ENCODE measurements at regions of chr14 and their contacts with region 1.

Region 1: DNA sequence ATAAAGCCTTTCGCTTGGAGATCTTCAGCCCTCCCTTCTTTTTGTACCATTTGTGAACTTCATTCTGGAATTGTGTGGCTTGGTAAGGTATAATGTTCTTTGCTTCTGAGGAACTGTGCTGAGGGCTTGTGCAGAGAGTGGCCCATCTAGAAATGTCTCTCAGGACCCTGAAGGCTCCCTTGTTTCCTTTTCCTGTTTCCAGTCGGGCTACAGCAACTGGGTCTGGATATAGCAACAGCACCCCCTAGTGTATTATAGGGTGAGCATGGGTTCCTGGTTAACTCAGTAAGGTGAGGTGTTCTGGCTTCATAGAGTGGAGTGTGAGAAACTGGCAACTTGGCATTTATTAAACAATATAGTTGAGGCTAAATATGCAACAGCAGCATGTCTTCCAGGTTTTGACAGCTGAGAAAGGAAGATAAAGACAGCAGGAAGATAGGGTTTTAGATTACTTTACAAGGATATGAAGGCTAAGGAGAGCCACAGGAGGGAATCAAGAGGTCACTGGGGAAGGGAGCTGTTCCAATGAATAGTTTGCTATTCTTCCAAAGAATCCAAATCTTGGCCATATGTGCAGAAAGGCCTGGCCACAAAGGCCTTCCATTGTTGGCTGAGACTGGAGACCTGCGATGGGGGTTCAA is 49.1 kb upstream of the RNU6-8 start:
- DNase-seq: peak; percentile 45
- H3K4me3 ChIP-seq: no peak overlapping the region
- H3K27ac ChIP-seq: no peak overlapping the region
- H3K27me3 ChIP-seq: peaks cover 2% of the 10 kb centered on the region
- CTCF ChIP-seq: peak; percentile 94

Region 2: GRCh38 chr14:31456841-31457664 is 795.1 kb before region 1 on chr14 and contains the start of gene DTD2:
- CTCF ChIA-PET with region 1: interaction called, 12 read pairs
- POLR2A ChIA-PET with region 1: no interaction called
- DNase-seq: peak; percentile 79
- H3K4me3 ChIP-seq: peak within 1 kb of the TSS; percentile 86
- H3K27ac ChIP-seq: peak within 1 kb of the TSS; percentile 83
- H3K27me3 ChIP-seq: no peaks in the 10 kb centered on the region
- CTCF ChIP-seq: no peak
- polyA plus RNA-seq, gene DTD2: 16.6 and 18.8 TPM in 2 replicates

Region 3: DNA sequence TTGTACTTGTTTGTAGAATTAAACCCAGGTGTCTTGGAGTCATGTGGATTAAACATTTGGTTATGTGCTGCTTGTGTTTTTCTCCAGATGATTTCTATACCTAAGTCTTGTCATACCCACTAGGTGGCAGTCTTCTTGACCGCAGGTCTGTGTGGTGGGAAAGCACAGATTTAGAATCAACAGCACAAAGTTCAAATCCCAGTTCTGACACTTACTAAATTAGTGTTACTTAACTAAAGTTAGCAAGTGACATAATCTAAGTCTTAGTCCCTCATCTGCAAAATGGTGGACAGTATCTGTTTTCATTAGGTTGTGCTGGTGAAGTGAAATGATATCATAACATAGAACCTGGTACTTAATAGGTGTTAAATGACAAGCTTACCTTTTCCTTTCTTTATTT is 326.0 kb before region 1 on chr14:
- CTCF ChIA-PET with region 1: interaction called, 31 read pairs
- POLR2A ChIA-PET with region 1: no interaction called
- DNase-seq: no peak
- H3K4me3 ChIP-seq: no peak overlapping the region
- H3K27ac ChIP-seq: no peak overlapping the region
- H3K27me3 ChIP-seq: no peaks in the 10 kb centered on the region
- CTCF ChIP-seq: peak; percentile 58

Region 4: DNA sequence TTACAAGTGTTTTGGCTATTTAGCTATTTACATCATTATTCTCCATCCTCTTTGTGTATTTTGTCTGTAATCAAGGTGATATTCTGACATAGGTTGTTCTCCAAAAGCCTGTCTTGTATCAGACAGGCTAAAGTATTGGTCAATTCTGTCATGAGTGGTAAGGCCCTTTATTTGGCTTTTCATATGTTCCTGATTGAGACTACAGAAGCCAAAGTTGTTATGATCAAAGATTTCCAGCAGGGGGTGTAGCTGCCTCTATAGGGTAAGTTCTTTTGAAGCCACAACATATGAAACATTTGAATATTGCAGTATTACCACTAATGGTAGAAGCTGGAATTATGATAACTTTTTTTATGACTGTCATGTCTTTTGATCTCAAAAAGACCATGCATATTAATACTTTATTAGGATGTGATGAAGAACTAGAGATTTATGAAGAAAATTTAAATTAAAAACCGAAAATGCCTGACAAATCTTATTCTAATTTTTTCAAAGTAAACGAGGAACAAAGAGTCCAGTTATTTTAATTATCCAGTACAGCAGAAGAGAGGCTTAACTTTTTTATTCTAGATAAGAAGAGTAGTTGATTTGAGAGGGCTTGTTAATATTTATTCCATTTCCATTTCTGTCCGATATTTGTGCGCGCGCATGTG is 178.5 kb before region 1 on chr14:
- CTCF ChIA-PET with region 1: interaction called, 93 read pairs
- POLR2A ChIA-PET with region 1: interaction called, 5 read pairs
- DNase-seq: peak; percentile 48
- H3K4me3 ChIP-seq: no peak overlapping the region
- H3K27ac ChIP-seq: no peak overlapping the region
- H3K27me3 ChIP-seq: no peaks in the 10 kb centered on the region
- CTCF ChIP-seq: peak; percentile 85

Region 5: DNA sequence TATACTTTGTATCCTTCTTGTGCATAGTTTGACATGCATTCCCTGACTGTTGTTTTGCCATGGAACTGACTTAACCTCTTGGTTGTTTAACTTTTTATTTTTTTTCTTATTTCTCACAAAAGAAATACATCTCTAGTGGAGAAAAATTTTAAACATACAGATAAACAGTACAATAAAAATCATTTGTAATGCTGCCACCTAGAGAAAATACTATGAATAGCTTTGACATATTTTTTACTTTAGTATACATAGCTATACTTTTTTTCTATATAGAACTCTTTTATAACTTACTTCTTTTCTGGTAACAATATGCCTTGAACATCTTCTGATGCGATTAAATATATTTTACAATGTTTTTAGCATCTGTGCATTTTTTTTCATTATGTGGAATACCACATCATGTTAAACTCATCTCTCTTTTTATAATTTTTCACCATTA is 261.4 kb after region 1 on chr14:
- CTCF ChIA-PET with region 1: interaction called, 10 read pairs
- POLR2A ChIA-PET with region 1: no interaction called
- DNase-seq: no peak
- H3K4me3 ChIP-seq: no peak overlapping the region
- H3K27ac ChIP-seq: no peak overlapping the region
- H3K27me3 ChIP-seq: no peaks in the 10 kb centered on the region
- CTCF ChIP-seq: peak; percentile 40; the same call in 1 of the 2 replicates